ENCODE measurements at regions of chr4 and their contacts with region 1.

Region 1: GRCh38 chr4:38856524-38857337 is at the start of gene TLR6:
- DNase-seq: peak; percentile 76
- H3K4me3 ChIP-seq: peak within 1 kb of the TSS in 3 of 4 donors; percentile 6 to 32 (median 24)
- H3K27ac ChIP-seq: peak within 1 kb of the TSS; percentile 43 to 77 (median 76)
- H3K4me1 ChIP-seq: peaks cover 3 to 19% (median 7%) of the 10 kb centered on the region in 4 donors
- H3K27me3 ChIP-seq: no peaks in the 10 kb centered on the region
- CTCF ChIP-seq: peak; percentile 79 to 81 (median 81)
- EP300 ChIP-seq: no peak
- POLR2A ChIP-seq: no peak
- total RNA-seq, gene TLR6: 1.6 to 5.9 (median 3.3) TPM

Region 2: DNA sequence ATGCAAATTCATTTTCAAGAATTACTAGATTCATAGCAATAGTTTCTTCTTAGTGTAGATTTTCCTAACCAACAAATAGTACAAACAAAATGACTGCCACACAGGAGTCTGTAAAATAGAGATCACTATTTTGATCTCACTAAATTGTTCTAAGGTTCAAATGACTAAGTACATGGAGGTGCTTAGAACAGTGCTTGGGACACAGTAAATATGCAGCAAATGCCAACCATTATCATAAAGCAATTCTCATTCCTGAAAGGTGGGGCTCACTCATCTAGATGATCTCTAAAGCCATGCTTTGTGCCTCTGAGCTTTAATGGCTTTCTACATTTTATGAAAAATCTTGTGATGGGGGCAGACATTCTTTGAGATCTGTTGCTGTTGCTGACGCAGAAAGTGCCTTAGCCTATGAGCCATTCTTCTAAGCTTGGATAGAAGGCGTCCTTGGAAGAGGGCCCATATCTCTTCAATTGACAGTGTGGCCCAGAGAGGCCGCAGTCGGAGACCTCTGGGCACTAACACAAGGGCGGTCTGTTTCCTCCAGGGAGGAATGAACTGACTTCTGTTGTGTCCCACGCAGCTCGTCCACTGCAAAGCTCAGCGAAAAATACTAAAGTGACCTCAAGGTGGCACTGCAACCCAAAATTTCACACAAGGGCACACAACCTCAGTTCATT is 97.5 kb before region 1 on chr4:
- in situ Hi-C with region 1: loop called in 2 of 4 experiments (anchors 5 to 10 kb)
- intact Hi-C with region 1: no loop called
- DNase-seq: peak; percentile 68
- H3K4me3 ChIP-seq: no peak overlapping the region
- H3K27ac ChIP-seq: peak overlapping the region in 2 of 4 donors; percentile 2 to 22
- H3K4me1 ChIP-seq: peaks cover 0 to 5% (median 0%) of the 10 kb centered on the region in 4 donors
- H3K27me3 ChIP-seq: no peaks in the 10 kb centered on the region
- CTCF ChIP-seq: peak; percentile 69 to 81 (median 71)
- EP300 ChIP-seq: no peak
- POLR2A ChIP-seq: no peak

Region 3: GRCh38 chr4:38768968-38769394 is 87.8 kb before region 1 on chr4:
- in situ Hi-C with region 1: loop called in 1 of 4 experiments (anchors 10 kb)
- intact Hi-C with region 1: no loop called
- DNase-seq: no peak
- H3K4me3 ChIP-seq: no peak overlapping the region
- H3K27ac ChIP-seq: peak overlapping the region in 1 of 4 donors; percentile 17
- H3K4me1 ChIP-seq: no peaks in the 10 kb centered on the region
- H3K27me3 ChIP-seq: no peaks in the 10 kb centered on the region
- CTCF ChIP-seq: no peak
- EP300 ChIP-seq: no peak
- POLR2A ChIP-seq: no peak